ENCODE measurements at regions of chr6 and their contacts with region 1.

Region 1: GRCh38 chr6:41683510-41684310 is 45.4 kb downstream of the MDFI start:
- DNase-seq: peak; percentile 84
- H3K4me3 Mint-ChIP-seq: peak overlapping the region; percentile 75
- H3K27ac Mint-ChIP-seq: peak overlapping the region; percentile 87
- H3K4me1 Mint-ChIP-seq: peaks cover 8% of the 10 kb centered on the region
- H3K27me3 Mint-ChIP-seq: no peaks in the 10 kb centered on the region

Region 2: GRCh38 chr6:41463062-41463930 is 220.4 kb before region 1 on chr6:
- CTCF ChIA-PET with region 1: no interaction called
- intact Hi-C with region 1: loop called (anchors 2 kb)
- DNase-seq: peak; percentile 53
- H3K4me3 Mint-ChIP-seq: no peak overlapping the region
- H3K27ac Mint-ChIP-seq: no peak overlapping the region
- H3K4me1 Mint-ChIP-seq: no peaks in the 10 kb centered on the region
- H3K27me3 Mint-ChIP-seq: peaks cover 34% of the 10 kb centered on the region

Region 3: DNA sequence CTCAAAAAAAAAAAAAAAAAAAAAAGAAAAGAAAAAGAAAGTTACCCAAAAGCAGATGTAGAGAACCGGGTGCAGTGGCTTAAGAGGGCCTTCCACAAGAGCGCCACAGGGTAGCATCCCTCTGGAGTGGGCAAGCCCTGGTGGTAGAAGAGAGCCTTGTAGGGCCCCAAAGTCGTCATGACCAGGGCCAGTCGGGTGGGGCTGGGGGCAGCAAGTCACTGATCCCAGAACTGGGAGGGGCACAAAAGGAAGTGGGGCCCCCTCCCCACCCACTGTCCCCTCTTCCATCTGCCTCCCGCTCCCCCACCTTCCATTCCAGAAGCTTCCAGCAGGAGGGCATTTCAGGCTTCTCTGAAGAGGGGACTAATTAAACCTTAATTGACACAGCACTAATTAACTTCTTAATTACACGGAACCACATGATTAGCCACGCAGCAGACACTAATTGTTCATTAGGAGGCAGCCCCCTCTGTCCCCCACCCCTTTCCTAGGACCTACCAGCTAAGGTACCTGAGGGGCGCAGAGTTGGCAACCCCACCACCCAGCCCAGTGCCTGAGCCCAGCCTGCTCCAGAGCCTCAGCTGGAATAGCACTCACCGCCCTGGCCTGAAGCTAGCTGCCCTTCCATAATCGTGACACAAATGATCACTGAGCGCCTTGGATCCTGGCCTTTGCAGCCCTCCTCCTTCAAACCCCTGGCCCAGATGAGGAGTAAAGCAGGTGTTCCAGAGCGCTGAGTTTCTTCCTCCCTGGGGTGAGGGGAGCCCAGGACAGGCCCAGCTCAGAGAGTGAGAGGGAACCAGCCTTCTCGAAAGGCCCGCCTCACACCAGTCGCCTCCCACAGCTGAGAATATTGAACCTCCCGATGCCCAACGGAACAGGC is 10.6 kb before region 1 on chr6:
- CTCF ChIA-PET with region 1: interaction called, 10 read pairs
- intact Hi-C with region 1: no loop called
- DNase-seq: no peak
- H3K4me3 Mint-ChIP-seq: no peak overlapping the region
- H3K27ac Mint-ChIP-seq: no peak overlapping the region
- H3K4me1 Mint-ChIP-seq: no peaks in the 10 kb centered on the region
- H3K27me3 Mint-ChIP-seq: peaks cover 6% of the 10 kb centered on the region

Region 4: DNA sequence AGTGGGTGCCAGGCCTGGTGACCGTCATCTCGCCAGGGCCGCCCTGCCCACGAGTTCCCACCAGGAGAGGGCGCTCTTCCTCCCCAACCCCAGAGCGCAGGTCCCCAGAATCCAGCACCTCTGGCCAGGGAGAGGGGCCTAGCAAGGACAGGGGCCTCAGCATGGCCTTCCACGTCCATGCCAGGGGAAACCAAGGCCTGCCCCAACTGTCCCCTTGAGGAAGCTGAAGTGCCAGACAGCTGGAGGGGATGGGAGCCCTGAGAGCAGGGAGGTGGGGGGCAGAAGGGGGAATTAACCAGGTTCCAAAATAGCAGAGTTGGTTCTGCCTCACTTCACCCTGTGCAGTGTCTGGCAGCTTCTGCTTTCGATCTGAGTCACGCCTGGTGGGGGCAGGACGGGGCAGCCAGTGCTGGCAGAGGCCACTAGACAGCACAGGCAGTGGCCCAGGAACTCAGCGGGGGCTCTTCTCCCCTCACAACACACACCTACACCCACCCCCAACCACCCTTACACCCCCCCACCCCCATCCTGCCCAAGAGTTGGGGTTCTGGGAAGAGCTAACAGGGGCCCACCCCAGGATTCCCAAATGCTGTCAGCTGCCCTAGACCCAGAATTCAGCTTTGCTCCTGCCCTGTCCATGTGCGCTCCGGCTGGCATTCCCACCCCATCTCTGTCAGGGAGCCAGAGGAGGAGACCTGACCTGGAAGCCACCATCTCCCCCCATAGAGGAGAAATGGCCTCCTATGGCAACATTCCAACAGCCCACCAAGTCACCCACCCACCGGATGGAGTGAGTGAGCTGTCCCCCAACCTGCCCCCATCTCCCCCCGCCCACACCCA is 22.5 kb after region 1 on chr6:
- CTCF ChIA-PET with region 1: interaction called, 13 read pairs
- intact Hi-C with region 1: loop called (anchors 2 kb)
- DNase-seq: peak; percentile 88
- H3K4me3 Mint-ChIP-seq: peak overlapping the region; percentile 26
- H3K27ac Mint-ChIP-seq: peak overlapping the region; percentile 87
- H3K4me1 Mint-ChIP-seq: peaks cover 29% of the 10 kb centered on the region
- H3K27me3 Mint-ChIP-seq: no peaks in the 10 kb centered on the region

Measured in activated naive CD4-positive, alpha-beta T cell treated with anti-CD3 and anti-CD28 coated beads for 36 hours (primary cell).